AG04449 (cell line): ENCODE measurements at regions of chr19 and their contacts with region 1.

Region 1: DNA sequence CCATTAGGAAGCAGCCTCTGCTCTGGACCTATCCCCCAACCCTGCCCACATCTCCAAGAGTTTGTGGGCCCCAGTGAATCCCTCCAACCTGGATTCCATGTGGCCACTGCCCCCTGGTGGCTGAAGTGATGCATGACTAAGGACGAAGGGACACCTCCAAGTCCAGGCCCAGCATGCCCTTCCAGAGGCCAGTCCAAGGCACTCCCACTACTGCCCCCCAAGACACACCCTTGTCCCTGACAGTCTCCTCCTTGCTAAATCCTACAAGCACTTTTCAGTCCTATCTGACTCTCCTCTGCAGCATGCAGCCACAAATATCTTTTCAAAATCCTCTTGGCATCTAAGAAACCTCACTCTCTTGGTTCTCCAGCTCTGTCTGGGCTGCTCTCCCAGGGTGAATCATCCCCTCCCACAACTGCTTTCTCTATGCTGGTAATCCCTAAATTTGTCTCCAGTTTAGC is 33.0 kb downstream of the DEDD2 start:
- DNase-seq: peak; percentile 62
- H3K4me3 ChIP-seq: no peak overlapping the region
- CTCF ChIP-seq: peak; percentile 91

Region 2: GRCh38 chr19:42140125-42140754 is 44.2 kb before region 1 on chr19:
- CTCF ChIA-PET with region 1: interaction called, 14 read pairs
- POLR2A ChIA-PET with region 1: no interaction called
- DNase-seq: no peak
- H3K4me3 ChIP-seq: no peak overlapping the region
- CTCF ChIP-seq: no peak

Region 3: DNA sequence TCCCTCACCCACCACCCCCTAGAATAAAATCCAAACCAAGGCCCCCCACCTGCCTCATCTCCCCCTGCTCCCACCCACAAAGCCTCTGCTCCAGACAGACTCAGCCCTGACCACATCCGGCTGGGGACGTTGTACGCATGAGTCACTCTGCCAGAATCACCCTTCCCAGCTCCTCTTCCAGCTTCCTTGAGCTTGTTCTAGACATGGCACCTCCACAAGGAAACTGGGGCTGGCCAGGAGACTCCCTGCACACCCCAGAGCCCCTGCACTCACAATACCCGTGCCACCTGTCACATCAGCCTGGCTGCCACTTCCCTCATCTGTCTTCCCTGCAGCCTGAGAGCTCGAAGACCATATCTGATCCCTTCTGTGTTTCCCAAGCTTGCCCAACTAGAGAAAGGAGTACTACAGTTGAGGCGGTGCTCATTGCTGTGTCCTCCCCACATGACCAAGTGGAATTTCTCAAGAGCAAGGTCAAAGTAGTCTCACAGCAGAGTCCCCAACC is 23.4 kb after region 1 on chr19:
- CTCF ChIA-PET with region 1: interaction called, 16 read pairs
- POLR2A ChIA-PET with region 1: no interaction called
- DNase-seq: peak; percentile 40
- H3K4me3 ChIP-seq: no peak overlapping the region
- CTCF ChIP-seq: no peak